Activated naive CD4-positive, alpha-beta T cell treated with anti-CD3 and anti-CD28 coated beads for 36 hours (primary cell): ENCODE measurements at regions of chr3 and their contacts with region 1.

Region 1: GRCh38 chr3:186930641-186931531 is 560 bp downstream of the ST6GAL1 start:
- DNase-seq: peak; percentile 74
- H3K4me3 Mint-ChIP-seq: peak overlapping the region; percentile 83
- H3K27ac Mint-ChIP-seq: peak overlapping the region; percentile 85
- H3K4me1 Mint-ChIP-seq: peaks cover 22% of the 10 kb centered on the region
- H3K27me3 Mint-ChIP-seq: no peaks in the 10 kb centered on the region

Region 2: DNA sequence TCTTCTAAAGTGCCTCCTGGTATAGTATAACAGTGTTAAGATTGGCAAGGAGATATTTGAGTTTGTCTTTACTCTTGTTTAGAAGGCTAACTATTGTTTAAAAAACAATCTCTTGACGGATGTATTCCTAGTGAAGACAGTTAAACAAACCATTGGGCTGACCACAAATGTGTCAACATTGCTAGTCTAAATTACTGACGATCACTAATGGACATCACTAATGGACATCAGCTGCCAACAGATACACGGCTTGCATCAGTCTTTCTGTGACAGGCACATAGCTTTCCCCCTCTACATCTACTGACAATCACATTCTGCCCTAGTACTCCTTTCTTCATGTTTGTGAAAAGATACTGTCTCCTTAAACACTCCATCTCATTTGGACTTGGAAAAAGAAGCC is 764.9 kb before region 1 on chr3:
- CTCF ChIA-PET with region 1: no interaction called
- intact Hi-C with region 1: no loop called
- DNase-seq: no peak
- H3K4me3 Mint-ChIP-seq: no peak overlapping the region
- H3K27ac Mint-ChIP-seq: no peak overlapping the region
- H3K4me1 Mint-ChIP-seq: no peaks in the 10 kb centered on the region
- H3K27me3 Mint-ChIP-seq: peaks cover 23% of the 10 kb centered on the region

Region 3: GRCh38 chr3:186783073-186783730 is 147.7 kb before region 1 on chr3 and contains the start of gene EIF4A2:
- CTCF ChIA-PET with region 1: no interaction called
- intact Hi-C with region 1: loop called (anchors 5 kb)
- DNase-seq: peak; percentile 91
- H3K4me3 Mint-ChIP-seq: peak within 1 kb of the TSS; percentile 99
- H3K27ac Mint-ChIP-seq: peak within 1 kb of the TSS; percentile 100
- H3K4me1 Mint-ChIP-seq: peaks cover 29% of the 10 kb centered on the region
- H3K27me3 Mint-ChIP-seq: peaks cover 3% of the 10 kb centered on the region
- total RNA-seq, gene EIF4A2: 445 to 469 TPM

Region 4: GRCh38 chr3:186882881-186883685 is 47.8 kb before region 1 on chr3:
- CTCF ChIA-PET with region 1: interaction called, 5 read pairs
- intact Hi-C with region 1: loop called (anchors 1 kb)
- DNase-seq: peak; percentile 74
- H3K4me3 Mint-ChIP-seq: peak overlapping the region; percentile 14
- H3K27ac Mint-ChIP-seq: peak overlapping the region; percentile 72
- H3K4me1 Mint-ChIP-seq: peaks cover 56% of the 10 kb centered on the region
- H3K27me3 Mint-ChIP-seq: no peaks in the 10 kb centered on the region

Region 5: DNA sequence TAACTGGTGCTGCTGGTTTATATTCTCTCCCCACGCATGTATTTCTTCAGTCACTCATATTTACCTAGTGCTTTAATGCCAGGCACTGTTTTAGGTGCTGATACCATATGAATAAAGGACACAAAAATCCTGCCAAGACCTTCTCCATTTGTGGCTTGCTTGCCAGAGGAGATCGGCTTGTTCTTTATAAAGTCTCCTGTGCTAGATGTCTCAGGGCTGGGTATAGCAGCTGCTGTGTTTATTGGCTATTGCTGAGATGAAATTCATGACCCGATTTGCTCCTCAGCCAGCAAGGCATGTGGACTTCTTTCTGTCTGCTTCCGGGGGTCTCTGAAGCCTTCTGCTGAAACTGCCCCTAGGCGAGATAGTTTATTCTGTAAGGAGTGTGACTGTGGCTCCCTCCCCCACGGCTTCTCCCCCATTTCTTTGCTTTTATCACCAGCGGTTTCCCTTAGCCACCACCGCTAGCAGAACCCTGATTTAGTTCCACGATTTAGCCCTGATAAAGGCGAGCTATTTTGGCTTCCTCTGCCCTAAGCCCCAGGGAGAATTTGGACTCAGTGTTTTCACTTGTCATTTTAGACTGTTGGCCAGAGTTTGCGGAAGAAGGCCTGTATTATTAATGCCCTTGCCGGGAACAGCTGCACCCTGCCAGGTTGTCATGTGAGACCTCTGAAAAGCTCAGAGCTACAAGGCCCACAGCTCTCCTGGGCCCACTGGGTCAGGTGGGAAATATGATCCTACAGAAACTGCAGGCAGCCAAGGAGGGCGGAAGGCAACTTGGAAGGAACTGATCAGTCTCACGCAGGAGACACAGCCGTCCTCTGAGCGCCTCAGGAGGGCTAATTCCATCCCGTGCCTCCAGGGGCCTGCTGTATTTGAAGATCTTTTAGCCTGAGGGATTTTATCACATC is 46.2 kb after region 1 on chr3:
- CTCF ChIA-PET with region 1: no interaction called
- intact Hi-C with region 1: no loop called
- DNase-seq: no peak
- H3K4me3 Mint-ChIP-seq: no peak overlapping the region
- H3K27ac Mint-ChIP-seq: no peak overlapping the region
- H3K4me1 Mint-ChIP-seq: peaks cover 15% of the 10 kb centered on the region
- H3K27me3 Mint-ChIP-seq: no peaks in the 10 kb centered on the region

Region 6: GRCh38 chr3:186988806-186989205 is 57.9 kb after region 1 on chr3:
- CTCF ChIA-PET with region 1: no interaction called
- intact Hi-C with region 1: loop called (anchors 2 kb)
- DNase-seq: peak; percentile 47
- H3K4me3 Mint-ChIP-seq: no peak overlapping the region
- H3K27ac Mint-ChIP-seq: peak overlapping the region; percentile 83
- H3K4me1 Mint-ChIP-seq: peaks cover 59% of the 10 kb centered on the region
- H3K27me3 Mint-ChIP-seq: no peaks in the 10 kb centered on the region

Region 7: DNA sequence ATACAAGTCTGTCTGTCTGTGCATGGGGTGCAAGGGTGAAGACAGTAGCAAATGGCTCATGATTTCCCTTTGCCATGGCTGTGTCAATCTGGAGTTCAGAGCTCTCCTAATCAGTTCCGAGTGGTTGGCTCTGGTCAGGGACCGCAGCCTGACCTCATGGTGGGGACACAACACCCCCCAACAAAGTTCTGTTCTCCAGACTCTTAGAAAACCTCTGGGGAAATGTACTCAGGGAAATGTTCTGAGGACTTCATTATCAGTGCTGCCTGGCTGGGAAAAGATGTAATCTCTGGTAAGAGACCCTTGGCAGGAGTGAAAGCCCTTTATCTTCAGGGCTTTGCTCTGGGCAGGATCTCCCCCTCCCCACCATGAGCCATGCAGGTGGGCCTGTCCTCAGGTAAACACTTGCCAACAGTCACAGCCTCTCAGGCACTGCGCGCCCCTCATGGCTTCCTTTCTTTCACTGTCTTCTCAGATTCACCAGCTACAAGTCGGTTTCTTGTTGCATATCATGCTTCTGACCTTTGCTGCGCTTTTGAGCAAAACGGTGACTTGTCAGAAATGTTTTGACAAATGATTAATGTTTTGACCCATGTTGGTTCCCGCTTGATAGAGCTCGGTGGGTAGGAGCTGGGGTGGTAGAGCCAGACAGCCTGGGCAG is 94.9 kb after region 1 on chr3:
- CTCF ChIA-PET with region 1: interaction called, 25 read pairs
- intact Hi-C with region 1: loop called (anchors 2 kb)
- DNase-seq: peak; percentile 61
- H3K4me3 Mint-ChIP-seq: peak overlapping the region; percentile 79
- H3K27ac Mint-ChIP-seq: peak overlapping the region; percentile 97
- H3K4me1 Mint-ChIP-seq: peaks cover 51% of the 10 kb centered on the region
- H3K27me3 Mint-ChIP-seq: no peaks in the 10 kb centered on the region

Region 8: DNA sequence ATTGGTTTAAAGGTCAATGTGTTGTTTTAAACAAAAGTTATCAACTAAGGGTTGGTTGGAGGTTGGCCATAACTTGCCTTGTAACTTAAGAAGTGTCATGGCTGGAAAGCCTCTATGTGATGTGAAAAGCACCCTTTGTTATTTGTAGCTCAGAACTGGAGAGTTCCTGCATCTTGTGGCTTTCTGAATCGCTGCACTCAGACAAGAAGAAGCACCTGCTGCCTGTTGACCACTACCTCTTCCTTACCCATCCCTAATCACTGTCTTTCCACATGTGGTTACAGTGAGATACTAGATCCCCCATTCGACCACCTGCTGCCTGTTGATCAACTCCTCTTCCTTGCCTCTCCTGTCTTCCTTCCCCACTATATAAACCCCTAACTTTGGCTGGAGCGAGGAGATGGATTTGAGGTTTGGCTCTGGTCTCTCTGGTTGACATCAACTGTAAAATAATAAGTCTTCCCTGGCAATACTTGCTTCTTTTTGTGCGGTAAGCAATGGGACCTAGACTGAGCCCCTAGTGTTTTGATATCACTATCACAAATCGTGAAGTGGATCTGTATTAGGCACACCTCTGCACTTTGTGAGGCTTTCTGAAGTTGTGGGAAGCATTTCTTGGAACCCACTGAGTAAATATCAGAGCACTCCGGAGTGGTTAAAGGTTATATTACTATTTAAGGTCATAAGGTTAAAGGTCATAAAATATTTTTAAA is 194.6 kb after region 1 on chr3:
- CTCF ChIA-PET with region 1: no interaction called
- intact Hi-C with region 1: no loop called
- DNase-seq: no peak
- H3K4me3 Mint-ChIP-seq: no peak overlapping the region
- H3K27ac Mint-ChIP-seq: no peak overlapping the region
- H3K4me1 Mint-ChIP-seq: peaks cover 17% of the 10 kb centered on the region
- H3K27me3 Mint-ChIP-seq: no peaks in the 10 kb centered on the region

Region 9: DNA sequence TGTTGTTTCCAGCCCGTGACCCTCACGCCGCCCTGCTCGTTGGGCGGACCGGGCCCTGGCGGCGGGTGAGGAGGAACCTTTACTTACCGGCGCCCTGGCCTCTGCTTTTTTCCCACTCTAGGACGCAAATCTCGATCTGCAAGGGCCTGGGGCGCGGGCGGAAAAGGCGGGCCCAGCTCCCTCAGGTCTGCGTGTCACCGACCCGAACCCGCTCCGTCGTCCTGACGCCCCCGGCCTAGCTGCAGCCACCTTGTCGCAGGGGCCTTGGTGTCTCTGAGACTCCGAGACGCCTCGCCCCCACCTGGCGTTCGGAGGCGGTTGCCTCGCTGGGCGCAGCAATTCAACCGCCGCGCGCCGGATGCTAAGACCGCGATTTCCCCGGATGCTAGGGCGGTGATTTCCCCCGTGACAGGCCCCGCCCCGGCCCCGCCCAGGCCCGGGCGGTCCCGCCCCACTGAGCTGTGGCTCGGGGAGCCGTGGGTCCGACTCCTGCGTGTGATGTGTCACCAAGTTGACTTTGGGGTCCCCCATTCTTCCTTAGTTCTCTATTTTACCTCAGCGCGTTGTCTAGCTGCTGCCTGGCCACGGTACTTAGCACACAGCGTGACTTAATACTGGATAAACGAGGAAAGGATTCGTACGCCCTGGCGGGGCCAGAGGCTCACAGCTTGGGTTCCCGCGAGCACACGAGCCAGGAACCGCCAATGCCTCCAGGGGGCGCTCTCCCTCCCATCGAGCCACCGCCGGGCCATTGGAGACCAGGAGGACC is 208.4 kb after region 1 on chr3 and contains the start of gene RPL39L:
- CTCF ChIA-PET with region 1: interaction called, 5 read pairs
- intact Hi-C with region 1: loop called (anchors 2 kb)
- DNase-seq: peak; percentile 95
- H3K4me3 Mint-ChIP-seq: peak within 1 kb of the TSS; percentile 91
- H3K27ac Mint-ChIP-seq: peak within 1 kb of the TSS; percentile 95
- H3K4me1 Mint-ChIP-seq: peaks cover 21% of the 10 kb centered on the region
- H3K27me3 Mint-ChIP-seq: no peaks in the 10 kb centered on the region
- total RNA-seq, gene RPL39L: 19.2 to 20.9 TPM